Esophagus muscularis mucosa (tissue), 4 donors: ENCODE measurements at regions of chr1 and their contacts with region 1.

Region 1: DNA sequence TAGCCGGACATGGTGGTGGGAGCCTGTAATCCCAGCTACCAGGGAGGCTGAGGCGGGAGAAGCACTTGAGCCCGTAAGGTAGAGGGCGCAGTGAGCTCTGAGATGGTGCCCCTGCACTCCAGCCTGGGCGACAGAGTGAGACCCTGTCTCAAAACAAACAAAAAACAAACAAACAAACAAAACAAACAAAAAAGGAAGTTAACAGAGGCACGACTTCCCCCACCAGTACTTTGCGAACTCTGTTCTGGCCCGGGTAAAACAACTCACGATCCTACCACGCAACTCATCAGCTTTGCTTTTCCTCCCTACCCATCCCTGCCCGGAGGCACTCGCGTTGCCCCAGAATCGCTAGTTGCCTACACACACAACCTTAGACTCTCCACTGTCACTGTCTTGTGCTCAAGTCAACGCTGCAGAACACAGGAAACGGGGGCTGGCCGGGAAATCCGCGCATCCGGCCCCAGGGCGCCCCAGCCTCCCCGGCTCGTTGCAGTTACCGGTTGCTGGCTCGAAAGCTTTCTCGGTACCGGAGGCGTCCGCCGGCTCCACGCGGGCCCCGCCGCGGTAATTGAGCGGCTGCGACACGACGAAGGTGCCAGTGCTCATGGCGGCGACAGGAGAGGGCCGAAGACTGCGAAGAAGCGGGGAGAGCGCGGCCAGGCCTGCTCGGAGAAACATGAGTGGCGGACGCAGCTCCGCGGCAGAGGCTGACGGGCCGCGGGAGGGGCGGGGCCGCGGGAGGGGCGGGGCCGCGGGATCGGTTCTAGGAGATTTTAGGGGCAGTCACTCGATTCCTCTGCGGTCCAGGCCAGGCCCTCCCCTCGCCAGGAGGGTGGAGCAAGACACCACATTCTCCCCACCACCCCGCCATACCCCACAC is at the start of gene ALDH9A1:
- DNase-seq: peak; percentile 96
- H3K4me3 ChIP-seq: peak within 1 kb of the TSS; percentile 57 to 91 (median 78)
- H3K27ac ChIP-seq: peak within 1 kb of the TSS; percentile 91 to 96 (median 94)
- H3K4me1 ChIP-seq: peaks cover 20 to 35% (median 31%) of the 10 kb centered on the region in 4 donors
- H3K27me3 ChIP-seq: peaks cover 0 to 1% (median 0%) of the 10 kb centered on the region in 4 donors
- CTCF ChIP-seq: peak; percentile 29 to 42 (median 38)
- EP300 ChIP-seq: no peak
- POLR2A ChIP-seq: peak; percentile 38
- total RNA-seq, gene ALDH9A1: 42.6 to 73.1 (median 66.1) TPM

Region 2: GRCh38 chr1:165768513-165769394 is 70.6 kb after region 1 on chr1 and contains the start of gene TMCO1:
- intact Hi-C with region 1: loop called (anchors 5 kb)
- DNase-seq: peak; percentile 98
- H3K4me3 ChIP-seq: peak within 1 kb of the TSS; percentile 59 to 93 (median 82)
- H3K27ac ChIP-seq: peak within 1 kb of the TSS; percentile 83 to 94 (median 87)
- H3K4me1 ChIP-seq: peaks cover 19 to 47% (median 41%) of the 10 kb centered on the region in 4 donors
- H3K27me3 ChIP-seq: no peaks in the 10 kb centered on the region
- CTCF ChIP-seq: peak; percentile 5 to 25 (median 12)
- EP300 ChIP-seq: no peak
- POLR2A ChIP-seq: no peak
- total RNA-seq, gene TMCO1: 36.0 to 45.7 (median 37.8) TPM